ENCODE measurements at regions of chr18 and their contacts with region 1.

Region 1: DNA sequence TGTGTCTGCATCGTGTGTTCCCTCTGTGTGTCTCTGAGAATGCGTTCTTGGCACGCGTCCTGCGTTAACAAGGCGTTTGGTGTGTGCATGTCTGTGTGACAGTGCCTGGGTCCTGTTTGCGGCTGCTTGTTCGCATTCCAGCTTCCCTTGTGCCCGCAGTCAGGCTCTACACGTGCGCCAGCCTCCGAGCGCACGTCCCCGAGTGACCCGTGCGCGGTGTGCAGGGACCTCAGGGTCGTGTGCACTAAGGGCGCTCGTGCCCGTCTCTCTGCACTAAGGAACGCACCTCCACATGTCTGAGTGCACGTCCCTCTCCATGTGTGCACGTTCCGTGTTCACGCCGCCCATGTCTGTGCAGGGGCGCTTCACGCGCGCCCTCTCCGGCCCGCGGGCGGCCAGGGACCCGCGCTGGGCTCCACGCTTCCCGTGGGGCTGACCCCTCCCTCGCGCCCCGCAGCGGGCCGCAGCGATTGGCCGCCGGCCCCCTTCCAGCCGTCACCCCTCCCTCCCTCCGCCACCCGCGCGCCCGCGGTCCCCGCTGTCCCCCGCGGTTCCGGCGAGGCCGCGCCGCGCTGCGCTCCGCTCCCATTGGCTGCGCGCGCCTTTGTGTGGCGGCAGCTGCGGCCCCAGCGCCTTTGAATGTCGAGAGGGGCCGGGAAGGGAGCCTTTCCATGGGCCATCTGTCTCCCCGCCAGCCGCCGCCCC is 229.4 kb downstream of the HAUS1 start:
- DNase-seq: peak; percentile 73 to 80
- H3K4me3 ChIP-seq: peak overlapping the region; percentile 32 to 70 (median 45)
- H3K27ac ChIP-seq: peak overlapping the region in 1 of 3 donors; percentile 36
- H3K4me1 ChIP-seq: peaks cover 21 to 26% of the 10 kb centered on the region in 2 donors
- H3K27me3 ChIP-seq: no peaks in the 10 kb centered on the region
- CTCF ChIP-seq: no peak
- POLR2A ChIP-seq: peak in 1 of 2 donors; percentile 27

Region 2: GRCh38 chr18:46264235-46264893 is 69.2 kb before region 1 on chr18:
- intact Hi-C with region 1: no loop called
- DNase-seq: no peak
- H3K4me3 ChIP-seq: no peak overlapping the region
- H3K27ac ChIP-seq: peak overlapping the region in 2 of 3 donors; percentile 43 to 60
- H3K4me1 ChIP-seq: peaks cover 27 to 72% of the 10 kb centered on the region in 2 donors
- H3K27me3 ChIP-seq: no peaks in the 10 kb centered on the region
- CTCF ChIP-seq: peak in 2 of 6 experiments; percentile 21 to 45
- POLR2A ChIP-seq: no peak

Region 3: DNA sequence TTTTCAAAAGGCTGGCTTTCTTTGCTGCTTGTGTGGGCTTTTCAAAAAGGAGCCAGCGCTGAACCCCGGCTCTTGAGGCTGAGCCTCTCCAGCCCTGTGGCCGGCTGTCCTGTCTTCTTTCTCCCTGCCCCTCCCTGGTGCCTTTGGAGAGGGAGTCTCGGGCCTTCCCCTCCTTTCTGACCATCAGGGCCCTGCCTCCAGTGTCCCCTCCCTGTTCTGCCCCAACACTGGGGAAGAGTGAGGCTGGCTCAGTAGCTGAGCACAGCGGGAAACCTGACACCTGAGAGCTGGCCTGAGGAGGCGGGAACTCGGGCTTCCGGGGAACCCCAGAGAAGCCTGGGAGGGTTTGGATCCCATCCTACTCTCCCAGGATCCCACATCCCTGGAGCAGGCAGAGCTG is 91.3 kb after region 1 on chr18:
- intact Hi-C with region 1: loop called (anchors 10 kb)
- DNase-seq: peak; percentile 70 to 80
- H3K4me3 ChIP-seq: no peak overlapping the region
- H3K27ac ChIP-seq: no peak overlapping the region
- H3K4me1 ChIP-seq: peaks cover 0 to 17% of the 10 kb centered on the region in 2 donors
- H3K27me3 ChIP-seq: no peaks in the 10 kb centered on the region
- CTCF ChIP-seq: no peak
- POLR2A ChIP-seq: no peak

Measured in thyroid gland (tissue), 4 donors.